ENCODE measurements at regions of chr5 and their contacts with region 1.

Region 1: GRCh38 chr5:57137401-57137800 is 36.5 kb upstream of the GPBP1 start:
- DNase-seq: no peak
- ATAC-seq: no peak
- H3K4me3 ChIP-seq: no peak overlapping the region
- H3K4me3 Mint-ChIP-seq: no peak overlapping the region
- H3K27ac ChIP-seq: no peak overlapping the region
- H3K27ac Mint-ChIP-seq: no peak overlapping the region
- H3K4me1 ChIP-seq: no peaks in the 10 kb centered on the region
- H3K4me1 Mint-ChIP-seq: no peaks in the 10 kb centered on the region
- H3K27me3 ChIP-seq: no peaks in the 10 kb centered on the region
- H3K27me3 Mint-ChIP-seq: peaks cover 12% of the 10 kb centered on the region
- CTCF ChIP-seq: no peak

Region 2: GRCh38 chr5:56264417-56265025 is 872.9 kb before region 1 on chr5:
- CTCF ChIA-PET with region 1: interaction called, 47 read pairs
- POLR2A ChIA-PET with region 1: no interaction called
- intact Hi-C with region 1: loop called (anchors 1 kb)
- DNase-seq: peak; percentile 57
- ATAC-seq: peak; percentile 80
- H3K4me3 ChIP-seq: no peak overlapping the region
- H3K4me3 Mint-ChIP-seq: no peak overlapping the region
- H3K27ac ChIP-seq: no peak overlapping the region
- H3K27ac Mint-ChIP-seq: no peak overlapping the region
- H3K4me1 ChIP-seq: peaks cover 2 to 3% of the 10 kb centered on the region in 2 donors
- H3K4me1 Mint-ChIP-seq: peaks cover 2% of the 10 kb centered on the region
- H3K27me3 ChIP-seq: no peaks in the 10 kb centered on the region
- H3K27me3 Mint-ChIP-seq: peaks cover 5% of the 10 kb centered on the region
- CTCF ChIP-seq: peak; percentile 73

Region 3: GRCh38 chr5:56951946-56952691 is 185.3 kb before region 1 on chr5 and contains the start of gene MIER3:
- CTCF ChIA-PET with region 1: interaction called, 21 read pairs
- POLR2A ChIA-PET with region 1: no interaction called
- intact Hi-C with region 1: loop called (anchors 2 kb)
- DNase-seq: peak; percentile 84
- ATAC-seq: peak; percentile 91
- H3K4me3 ChIP-seq: peak within 1 kb of the TSS; percentile 38 to 77 (median 72)
- H3K4me3 Mint-ChIP-seq: peak within 1 kb of the TSS; percentile 97
- H3K27ac ChIP-seq: peak within 1 kb of the TSS in 1 of 2 donors; percentile 59
- H3K27ac Mint-ChIP-seq: peak within 1 kb of the TSS; percentile 88
- H3K4me1 ChIP-seq: peaks cover 17 to 19% of the 10 kb centered on the region in 2 donors
- H3K4me1 Mint-ChIP-seq: peaks cover 25% of the 10 kb centered on the region
- H3K27me3 ChIP-seq: peaks cover 0 to 5% (median 1%) of the 10 kb centered on the region in 4 experiments
- H3K27me3 Mint-ChIP-seq: peaks cover 11% of the 10 kb centered on the region
- CTCF ChIP-seq: no peak
- total RNA-seq, gene MIER3: 23.2 and 25.9 TPM in 2 replicates

Region 4: DNA sequence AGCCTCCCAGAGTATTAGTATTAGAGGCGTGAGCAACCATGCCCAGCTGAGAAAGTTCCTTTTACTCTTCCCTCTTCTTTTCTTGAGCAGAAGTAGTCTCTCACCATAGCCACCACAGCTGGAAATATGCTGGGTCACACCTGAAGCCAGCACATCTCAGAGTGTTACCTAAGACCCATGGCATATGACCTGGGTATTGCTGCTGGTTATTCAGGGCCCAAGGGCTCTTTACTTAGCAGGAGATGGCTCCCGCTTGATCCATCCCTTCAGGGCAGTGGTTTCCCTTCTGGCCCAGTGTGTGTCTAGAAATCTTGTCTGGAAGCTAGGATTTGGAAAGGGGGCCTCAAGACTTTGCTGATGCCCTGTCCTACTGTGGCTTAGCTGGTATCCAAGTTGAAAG is 13.3 kb after region 1 on chr5:
- CTCF ChIA-PET with region 1: interaction called, 11 read pairs
- POLR2A ChIA-PET with region 1: no interaction called
- intact Hi-C with region 1: no loop called
- DNase-seq: no peak
- ATAC-seq: no peak
- H3K4me3 ChIP-seq: no peak overlapping the region
- H3K4me3 Mint-ChIP-seq: no peak overlapping the region
- H3K27ac ChIP-seq: no peak overlapping the region
- H3K27ac Mint-ChIP-seq: no peak overlapping the region
- H3K4me1 ChIP-seq: no peaks in the 10 kb centered on the region
- H3K4me1 Mint-ChIP-seq: no peaks in the 10 kb centered on the region
- H3K27me3 ChIP-seq: no peaks in the 10 kb centered on the region
- H3K27me3 Mint-ChIP-seq: peaks cover 12% of the 10 kb centered on the region
- CTCF ChIP-seq: no peak

Region 5: DNA sequence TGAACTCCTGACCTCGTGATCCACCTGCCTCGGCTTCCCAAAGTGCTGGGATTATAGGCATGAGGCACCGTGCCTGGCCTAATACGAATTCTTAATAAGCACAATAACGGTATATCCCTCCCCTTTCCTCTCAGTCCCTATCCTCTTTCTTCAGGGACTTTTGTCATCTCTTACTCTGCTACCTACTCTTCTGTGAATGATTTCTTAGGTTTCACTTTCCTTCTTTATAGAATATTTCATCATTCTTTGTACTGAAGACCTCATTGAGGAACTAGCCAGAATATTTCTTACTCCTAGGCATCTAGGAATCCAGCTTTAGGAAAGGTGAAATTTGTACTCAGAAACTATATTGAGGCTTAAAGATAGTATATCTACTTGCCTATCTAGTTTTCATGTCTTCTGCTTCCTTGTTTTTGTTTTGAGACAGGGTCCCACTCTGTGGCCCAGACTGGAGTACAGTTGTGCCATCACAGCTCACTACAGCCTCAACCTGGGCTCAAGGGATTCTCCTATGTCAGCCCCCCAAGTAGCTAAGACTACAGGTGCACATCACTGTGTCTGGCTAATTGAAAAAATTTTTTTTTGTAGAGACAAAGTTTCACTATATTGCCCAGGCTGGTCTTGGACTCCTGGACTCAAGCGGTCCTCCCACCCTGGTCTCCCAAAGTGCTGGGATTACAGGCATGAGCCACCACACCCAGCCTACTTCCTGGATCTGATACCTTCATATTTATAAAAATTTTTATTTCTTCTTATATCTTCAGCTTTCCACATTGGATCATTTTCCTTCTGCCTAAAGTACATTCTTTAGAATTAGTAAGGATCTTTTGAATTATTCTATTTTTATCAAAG is 106.1 kb after region 1 on chr5:
- CTCF ChIA-PET with region 1: interaction called, 13 read pairs
- POLR2A ChIA-PET with region 1: no interaction called
- intact Hi-C with region 1: no loop called
- DNase-seq: no peak
- ATAC-seq: no peak
- H3K4me3 ChIP-seq: no peak overlapping the region
- H3K4me3 Mint-ChIP-seq: no peak overlapping the region
- H3K27ac ChIP-seq: peak overlapping the region in 1 of 2 donors; percentile 54
- H3K27ac Mint-ChIP-seq: peak overlapping the region; percentile 73
- H3K4me1 ChIP-seq: no peaks in the 10 kb centered on the region
- H3K4me1 Mint-ChIP-seq: peaks cover 2% of the 10 kb centered on the region
- H3K27me3 ChIP-seq: no peaks in the 10 kb centered on the region
- H3K27me3 Mint-ChIP-seq: no peaks in the 10 kb centered on the region
- CTCF ChIP-seq: no peak

Region 6: GRCh38 chr5:58080558-58080957 is 943.2 kb after region 1 on chr5:
- CTCF ChIA-PET with region 1: no interaction called
- POLR2A ChIA-PET with region 1: no interaction called
- intact Hi-C with region 1: no loop called
- DNase-seq: no peak
- ATAC-seq: no peak
- H3K4me3 ChIP-seq: no peak overlapping the region
- H3K4me3 Mint-ChIP-seq: no peak overlapping the region
- H3K27ac ChIP-seq: no peak overlapping the region
- H3K27ac Mint-ChIP-seq: no peak overlapping the region
- H3K4me1 ChIP-seq: no peaks in the 10 kb centered on the region
- H3K4me1 Mint-ChIP-seq: no peaks in the 10 kb centered on the region
- H3K27me3 ChIP-seq: no peaks in the 10 kb centered on the region
- H3K27me3 Mint-ChIP-seq: no peaks in the 10 kb centered on the region
- CTCF ChIP-seq: no peak